ENCODE measurements at regions of chr15 and their contacts with region 1.

Region 1: GRCh38 chr15:99421172-99421656 is 144.6 kb upstream of the MEF2A start:
- DNase-seq: peak; percentile 89
- ATAC-seq: peak; percentile 95
- H3K4me3 ChIP-seq: peak overlapping the region; percentile 45 to 67 (median 62); a peak in 5 of 6 replicates
- H3K27ac ChIP-seq: peak overlapping the region; percentile 96
- H3K4me1 ChIP-seq: peaks cover 60% of the 10 kb centered on the region
- H3K27me3 ChIP-seq: no peaks in the 10 kb centered on the region
- CTCF ChIP-seq: 0 out of 2 replicates have a peak, but pooled peaks have one; percentile 12
- EP300 ChIP-seq: peak in 1 of 2 experiments; percentile 60; a peak in 2 of 4 replicates
- POLR2A ChIP-seq: peak; percentile 60 to 74
- RAD21 ChIP-seq: peak; percentile 56

Region 2: DNA sequence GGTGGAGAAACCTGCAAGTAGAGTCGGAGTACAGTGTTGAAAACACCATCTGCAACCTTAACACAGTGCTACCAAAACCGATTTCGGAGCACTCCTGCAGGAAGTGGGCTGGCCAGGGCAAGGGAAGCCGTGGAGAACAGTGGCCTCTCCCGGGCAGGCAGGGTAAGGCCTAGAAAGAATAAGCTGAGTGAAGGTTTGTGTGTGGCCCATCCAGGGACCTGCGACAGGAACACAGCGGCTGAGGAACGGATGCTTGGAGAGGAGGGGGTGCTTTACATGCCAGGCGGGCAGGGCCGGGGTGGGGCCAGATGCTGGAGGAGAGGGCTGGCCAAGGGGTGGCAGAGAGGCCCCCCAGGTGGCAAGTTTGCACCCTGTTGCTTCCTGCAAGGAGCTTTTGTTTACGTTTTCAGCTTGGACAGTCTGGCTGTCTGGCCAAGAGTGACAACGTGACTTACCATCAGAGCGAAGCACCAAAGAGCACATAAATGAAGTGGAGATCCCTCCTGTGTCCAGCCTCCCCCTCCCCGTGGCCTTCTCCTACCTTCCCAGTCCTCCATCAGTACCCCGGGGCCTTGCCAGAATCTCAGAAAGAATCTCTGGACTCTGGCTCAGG is 570.1 kb before region 1 on chr15:
- CTCF ChIA-PET with region 1: no interaction called
- POLR2A ChIA-PET with region 1: no interaction called
- in situ Hi-C with region 1: no loop called
- intact Hi-C with region 1: no loop called
- DNase-seq: peak; percentile 61
- ATAC-seq: peak; percentile 92
- H3K4me3 ChIP-seq: peak overlapping the region in 2 of 3 experiments; percentile 69 to 74; a peak in 2 of 6 replicates
- H3K27ac ChIP-seq: no peak overlapping the region
- H3K4me1 ChIP-seq: peaks cover 33% of the 10 kb centered on the region
- H3K27me3 ChIP-seq: no peaks in the 10 kb centered on the region
- CTCF ChIP-seq: peak; percentile 93
- EP300 ChIP-seq: no peak
- POLR2A ChIP-seq: no peak
- RAD21 ChIP-seq: peak; percentile 82

Region 3: DNA sequence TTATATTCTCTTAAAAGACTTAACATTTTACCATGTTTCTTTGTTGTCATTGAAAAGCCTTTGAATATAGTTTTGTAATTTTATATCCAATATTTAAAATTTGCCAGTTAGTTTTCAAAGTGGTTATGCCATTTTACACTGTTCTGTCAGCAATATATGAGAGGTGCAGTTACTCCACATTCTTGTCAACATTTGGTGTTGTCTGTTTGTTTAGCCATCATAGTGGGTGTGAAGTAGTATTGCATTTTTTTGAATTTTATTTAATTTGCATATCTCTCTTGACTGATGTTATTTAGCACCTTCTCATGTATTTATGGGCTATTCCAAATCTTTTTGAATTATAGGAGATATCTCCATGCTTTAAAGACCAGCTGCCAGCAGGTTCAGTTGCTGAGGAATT is 129.6 kb before region 1 on chr15:
- CTCF ChIA-PET with region 1: no interaction called
- POLR2A ChIA-PET with region 1: no interaction called
- in situ Hi-C with region 1: no loop called
- intact Hi-C with region 1: no loop called
- DNase-seq: no peak
- ATAC-seq: no peak
- H3K4me3 ChIP-seq: no peak overlapping the region
- H3K27ac ChIP-seq: no peak overlapping the region
- H3K4me1 ChIP-seq: peaks cover 19% of the 10 kb centered on the region
- H3K27me3 ChIP-seq: no peaks in the 10 kb centered on the region
- CTCF ChIP-seq: no peak
- EP300 ChIP-seq: no peak
- POLR2A ChIP-seq: no peak
- RAD21 ChIP-seq: no peak

Region 4: GRCh38 chr15:99409097-99409473 is 12.1 kb before region 1 on chr15:
- CTCF ChIA-PET with region 1: no interaction called
- POLR2A ChIA-PET with region 1: interaction called, 14 read pairs
- in situ Hi-C with region 1: no loop called
- intact Hi-C with region 1: no loop called
- DNase-seq: peak; percentile 66
- ATAC-seq: peak; percentile 94
- H3K4me3 ChIP-seq: peak overlapping the region in 1 of 3 experiments; percentile 40; a peak in 1 of 6 replicates
- H3K27ac ChIP-seq: no peak overlapping the region
- H3K4me1 ChIP-seq: peaks cover 40% of the 10 kb centered on the region
- H3K27me3 ChIP-seq: no peaks in the 10 kb centered on the region; a peak in 1 of 5 replicates
- CTCF ChIP-seq: peak; percentile 91
- EP300 ChIP-seq: no peak
- POLR2A ChIP-seq: no peak
- RAD21 ChIP-seq: peak; percentile 85

Region 5: DNA sequence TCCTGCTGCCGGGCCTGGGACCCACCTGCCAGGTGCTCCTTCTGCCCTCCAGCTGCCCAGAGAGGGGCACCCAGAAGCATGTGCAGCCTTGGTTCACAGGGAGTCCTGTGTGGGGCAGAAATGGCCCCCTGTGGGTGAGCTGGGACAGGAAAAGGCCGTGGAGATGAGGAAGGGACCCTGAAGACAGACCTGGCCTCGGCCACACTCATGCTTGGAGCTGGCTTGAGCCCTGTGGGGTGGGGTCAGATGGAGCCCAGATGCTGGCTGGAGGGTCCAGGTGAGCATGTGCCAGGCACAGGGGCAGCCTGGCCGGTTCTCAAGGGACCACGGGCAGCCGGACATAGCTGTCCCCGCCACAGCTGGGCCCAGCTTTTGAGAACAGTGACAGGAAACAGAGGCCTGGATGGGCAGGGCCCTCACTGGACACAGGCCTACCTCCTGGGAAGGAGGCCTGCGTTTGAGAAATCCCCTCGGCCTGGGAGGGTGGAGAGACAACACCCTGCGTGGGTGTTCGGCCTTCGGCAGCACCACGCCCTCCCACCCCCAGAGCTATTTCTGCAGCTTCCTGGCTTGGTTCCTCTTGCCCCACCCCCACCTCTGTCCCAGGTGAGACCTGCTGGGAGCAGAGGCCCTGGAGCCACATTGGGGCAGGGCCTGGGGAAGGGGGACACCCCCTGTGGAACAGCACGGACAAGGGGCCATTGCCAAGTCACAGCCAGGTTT is 12.0 kb after region 1 on chr15:
- CTCF ChIA-PET with region 1: no interaction called
- POLR2A ChIA-PET with region 1: interaction called, 11 read pairs
- in situ Hi-C with region 1: no loop called
- intact Hi-C with region 1: no loop called
- DNase-seq: no peak
- ATAC-seq: peak; percentile 46
- H3K4me3 ChIP-seq: peak overlapping the region in 1 of 3 experiments; percentile 28; a peak in 1 of 6 replicates
- H3K27ac ChIP-seq: no peak overlapping the region
- H3K4me1 ChIP-seq: peaks cover 41% of the 10 kb centered on the region
- H3K27me3 ChIP-seq: peaks cover 9 to 72% of the 10 kb centered on the region in 2 experiments
- CTCF ChIP-seq: no peak
- EP300 ChIP-seq: no peak
- POLR2A ChIP-seq: no peak
- RAD21 ChIP-seq: no peak

Region 6: DNA sequence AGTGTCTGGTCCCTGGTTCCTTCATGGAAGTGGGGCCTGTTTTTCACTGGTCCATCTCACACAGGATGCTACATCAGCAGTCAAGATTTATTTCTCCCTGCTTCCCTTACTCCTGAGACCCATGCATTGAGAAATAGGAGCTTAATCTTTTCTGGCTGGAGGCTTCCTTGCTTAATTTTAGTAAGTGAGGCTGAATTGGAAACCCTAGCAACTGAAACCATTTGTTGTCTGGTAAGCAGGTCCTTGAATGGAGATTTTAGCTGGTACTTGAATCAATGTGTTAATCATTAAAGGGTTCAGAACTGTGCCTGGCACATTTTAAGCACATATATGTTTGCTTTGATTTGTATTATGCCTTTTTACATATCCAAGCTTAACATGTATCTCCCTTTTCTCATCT is 124.4 kb after region 1 on chr15:
- CTCF ChIA-PET with region 1: no interaction called
- POLR2A ChIA-PET with region 1: no interaction called
- in situ Hi-C with region 1: no loop called
- intact Hi-C with region 1: no loop called
- DNase-seq: no peak
- ATAC-seq: no peak
- H3K4me3 ChIP-seq: no peak overlapping the region
- H3K27ac ChIP-seq: no peak overlapping the region
- H3K4me1 ChIP-seq: no peaks in the 10 kb centered on the region
- H3K27me3 ChIP-seq: peaks cover 0 to 18% of the 10 kb centered on the region in 2 experiments; a peak in 2 of 5 replicates
- CTCF ChIP-seq: no peak
- EP300 ChIP-seq: no peak
- POLR2A ChIP-seq: no peak
- RAD21 ChIP-seq: no peak